H1 (cell line): ENCODE measurements at regions of chr3 and their contacts with region 1.

Region 1: DNA sequence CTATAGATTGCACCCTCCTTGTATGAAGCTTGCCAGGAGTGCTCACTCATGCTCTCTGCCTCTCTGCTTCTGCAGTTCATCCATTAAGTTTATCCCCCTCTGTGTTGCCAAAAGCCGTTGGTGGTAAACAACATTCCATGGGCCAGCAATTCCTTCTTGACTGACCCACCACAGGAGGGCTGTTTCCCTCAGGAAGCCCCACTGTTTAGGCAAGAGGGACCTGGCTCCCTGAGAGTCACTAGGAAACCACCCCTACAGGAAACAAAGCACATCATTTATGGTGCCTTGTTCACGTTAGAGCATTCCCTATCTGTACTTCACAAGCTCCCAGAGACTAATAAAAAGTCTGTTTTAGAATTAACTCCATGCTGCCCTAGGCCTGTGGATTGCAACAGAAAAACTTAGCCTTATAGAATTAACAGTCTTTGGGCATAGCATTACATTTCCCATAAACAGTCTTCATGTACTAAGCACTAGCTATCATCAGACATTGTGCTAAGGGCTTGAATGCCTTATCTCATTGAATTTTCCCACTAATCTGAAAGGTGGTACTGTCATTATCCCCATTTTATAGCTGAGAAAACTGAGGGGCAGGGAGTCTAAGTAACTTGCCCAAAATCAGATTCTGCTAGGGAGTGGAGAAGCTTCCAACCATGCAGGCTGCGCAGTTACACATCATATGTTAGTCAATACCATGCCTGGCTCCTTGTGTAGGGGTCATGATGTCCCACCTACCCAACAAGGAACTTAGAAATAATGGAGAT is 149.9 kb downstream of the SHQ1 start:
- DNase-seq: peak in 1 of 2 experiments; percentile 21
- H3K4me3 ChIP-seq: no peak overlapping the region
- H3K27ac ChIP-seq: 0 out of 2 replicates have a peak overlapping the region, but pooled peaks have one; percentile 24
- H3K4me1 ChIP-seq: peaks cover 0 to 11% (median 7%) of the 10 kb centered on the region in 4 experiments; a peak in 3 of 7 replicates
- H3K27me3 ChIP-seq: no peaks in the 10 kb centered on the region; a peak in 1 of 7 replicates
- CTCF ChIP-seq: no peak
- EP300 ChIP-seq: peak in 1 of 2 experiments; percentile 70; a peak in 1 of 3 replicates
- POLR2A ChIP-seq: no peak
- RAD21 ChIP-seq: peak; percentile 7 to 12; a peak in 1 of 4 replicates

Region 2: GRCh38 chr3:72811551-72811950 is 113.2 kb after region 1 on chr3:
- CTCF ChIA-PET with region 1: interaction called, 10 read pairs
- POLR2A ChIA-PET with region 1: no interaction called
- DNase-seq: no peak
- H3K4me3 ChIP-seq: 0 out of 8 replicates have a peak overlapping the region, but pooled peaks of 1 of the 4 experiments have one; percentile 0
- H3K27ac ChIP-seq: no peak overlapping the region
- H3K4me1 ChIP-seq: peaks cover 0 to 19% (median 11%) of the 10 kb centered on the region in 4 experiments; a peak in 6 of 7 replicates
- H3K27me3 ChIP-seq: no peaks in the 10 kb centered on the region
- CTCF ChIP-seq: peak in 2 of 3 experiments; percentile 29 to 41; a peak in 2 of 4 replicates
- EP300 ChIP-seq: no peak
- POLR2A ChIP-seq: no peak
- RAD21 ChIP-seq: peak; percentile 56 to 64